Breast epithelium (tissue), 4 donors: ENCODE measurements at regions of chr13 and their contacts with region 1.

Region 1: GRCh38 chr13:55298201-55298600 is 1842.5 kb upstream of the PRR20A start:
- DNase-seq: no peak
- H3K4me3 ChIP-seq: no peak overlapping the region
- H3K27ac ChIP-seq: no peak overlapping the region
- H3K4me1 ChIP-seq: no peaks in the 10 kb centered on the region
- H3K27me3 ChIP-seq: no peaks in the 10 kb centered on the region
- CTCF ChIP-seq: no peak
- POLR2A ChIP-seq: no peak

Region 2: GRCh38 chr13:53743906-53744305 is 1554.3 kb before region 1 on chr13:
- intact Hi-C with region 1: no loop called
- DNase-seq: no peak
- H3K4me3 ChIP-seq: no peak overlapping the region
- H3K27ac ChIP-seq: no peak overlapping the region
- H3K4me1 ChIP-seq: no peaks in the 10 kb centered on the region
- H3K27me3 ChIP-seq: no peaks in the 10 kb centered on the region
- CTCF ChIP-seq: no peak
- POLR2A ChIP-seq: no peak

Region 3: GRCh38 chr13:54614726-54615125 is 683.5 kb before region 1 on chr13:
- intact Hi-C with region 1: no loop called
- DNase-seq: no peak
- H3K4me3 ChIP-seq: no peak overlapping the region
- H3K27ac ChIP-seq: no peak overlapping the region
- H3K4me1 ChIP-seq: no peaks in the 10 kb centered on the region
- H3K27me3 ChIP-seq: no peaks in the 10 kb centered on the region
- CTCF ChIP-seq: no peak
- POLR2A ChIP-seq: no peak

Region 4: DNA sequence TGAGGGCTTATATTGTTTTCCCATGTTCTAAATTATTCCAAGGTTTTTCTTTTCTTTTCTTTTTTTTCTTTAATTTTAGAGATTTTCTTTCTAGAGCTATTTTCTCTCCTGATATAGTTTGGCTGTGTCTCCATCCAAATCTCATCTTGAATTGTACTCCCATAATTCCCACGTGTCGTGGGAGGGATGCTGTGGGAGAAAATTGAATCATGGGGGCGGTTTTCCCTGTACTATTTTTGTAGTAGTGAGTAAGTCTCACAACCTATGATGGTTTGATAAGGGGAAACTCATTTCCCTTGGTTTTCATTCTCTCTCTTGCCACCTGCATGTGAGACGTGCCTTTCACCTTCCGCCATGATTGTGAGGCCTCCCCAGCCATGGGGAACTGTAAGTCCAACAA is 63.9 kb before region 1 on chr13:
- intact Hi-C with region 1: loop called (anchors 2 kb)
- DNase-seq: no peak
- H3K4me3 ChIP-seq: no peak overlapping the region
- H3K27ac ChIP-seq: no peak overlapping the region
- H3K4me1 ChIP-seq: no peaks in the 10 kb centered on the region
- H3K27me3 ChIP-seq: no peaks in the 10 kb centered on the region
- CTCF ChIP-seq: no peak
- POLR2A ChIP-seq: no peak

Region 5: DNA sequence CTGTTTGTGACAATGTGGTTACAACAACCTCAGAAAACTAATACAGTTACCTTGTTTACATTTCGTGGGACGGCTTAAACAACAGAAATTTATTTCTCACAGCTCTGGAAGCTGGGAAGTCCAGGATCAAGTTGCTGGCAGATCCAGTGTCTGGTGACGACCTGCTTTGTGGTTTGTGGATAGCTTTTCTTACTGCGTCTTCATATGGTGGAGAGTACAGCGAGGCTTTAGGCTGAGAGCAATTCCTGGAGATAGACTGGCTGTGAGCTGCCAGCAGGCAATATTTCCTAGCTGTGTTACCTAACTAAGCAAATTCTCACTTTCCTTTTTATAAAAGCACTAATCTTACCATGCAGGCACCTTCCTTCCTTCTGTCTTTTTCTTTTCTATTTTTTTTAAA is 639.0 kb after region 1 on chr13:
- intact Hi-C with region 1: no loop called
- DNase-seq: no peak
- H3K4me3 ChIP-seq: no peak overlapping the region
- H3K27ac ChIP-seq: no peak overlapping the region
- H3K4me1 ChIP-seq: no peaks in the 10 kb centered on the region
- H3K27me3 ChIP-seq: no peaks in the 10 kb centered on the region
- CTCF ChIP-seq: no peak
- POLR2A ChIP-seq: no peak

Region 6: DNA sequence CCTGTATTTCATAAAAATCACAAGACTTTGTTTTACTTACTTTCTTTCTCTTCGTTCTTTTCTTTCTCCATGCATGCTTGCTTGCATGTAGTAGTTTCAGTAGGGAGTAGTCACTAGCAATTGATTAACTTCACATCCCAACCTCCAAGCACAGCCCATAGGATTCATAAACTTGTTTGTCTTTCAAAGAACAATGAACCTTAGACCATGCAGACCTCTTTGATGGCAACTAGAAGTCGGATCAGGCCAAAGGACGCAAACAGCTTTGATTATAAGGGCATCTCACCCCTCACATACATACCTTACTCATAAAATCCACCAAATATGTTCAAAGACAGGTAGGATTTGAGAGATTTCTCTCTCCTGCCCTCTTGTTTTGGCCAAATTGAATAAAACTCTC is 1839.4 kb after region 1 on chr13:
- intact Hi-C with region 1: no loop called
- DNase-seq: no peak
- H3K4me3 ChIP-seq: no peak overlapping the region
- H3K27ac ChIP-seq: no peak overlapping the region
- H3K4me1 ChIP-seq: no peaks in the 10 kb centered on the region
- H3K27me3 ChIP-seq: no peaks in the 10 kb centered on the region
- CTCF ChIP-seq: no peak
- POLR2A ChIP-seq: no peak